ENCODE measurements at regions of chr2 and their contacts with region 1.

Region 1: GRCh38 chr2:158034199-158034866 is 67.3 kb upstream of the UPP2 start:
- DNase-seq: peak; percentile 54
- H3K4me3 ChIP-seq: no peak overlapping the region
- H3K27ac ChIP-seq: no peak overlapping the region
- H3K4me1 ChIP-seq: no peaks in the 10 kb centered on the region
- H3K27me3 ChIP-seq: no peaks in the 10 kb centered on the region
- CTCF ChIP-seq: peak; percentile 32 to 62 (median 51)
- EP300 ChIP-seq: no peak
- POLR2A ChIP-seq: no peak

Region 2: DNA sequence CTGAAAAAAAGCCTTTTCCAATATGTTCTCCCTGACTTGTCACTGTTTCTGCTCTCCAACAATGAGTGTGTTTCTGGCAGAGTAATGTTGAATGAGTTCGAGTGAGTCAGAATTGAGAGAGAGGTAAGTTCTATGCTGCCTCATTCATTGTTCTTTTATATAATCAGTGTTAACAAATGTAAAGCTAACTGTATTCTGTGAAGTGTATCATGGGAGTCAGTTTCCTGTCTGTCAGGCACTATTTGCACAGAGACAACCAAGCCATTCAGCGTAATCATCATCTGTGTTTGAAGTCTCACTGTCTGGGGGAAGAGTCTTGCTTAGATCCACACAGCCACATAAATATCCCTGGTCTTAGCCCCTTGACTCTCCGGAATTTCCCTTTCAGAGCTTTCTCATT is 45.3 kb after region 1 on chr2:
- in situ Hi-C with region 1: no loop called
- intact Hi-C with region 1: no loop called
- DNase-seq: no peak
- H3K4me3 ChIP-seq: no peak overlapping the region
- H3K27ac ChIP-seq: no peak overlapping the region
- H3K4me1 ChIP-seq: no peaks in the 10 kb centered on the region
- H3K27me3 ChIP-seq: no peaks in the 10 kb centered on the region
- CTCF ChIP-seq: no peak
- EP300 ChIP-seq: no peak
- POLR2A ChIP-seq: no peak

Region 3: GRCh38 chr2:158753641-158754611 is 719.6 kb after region 1 on chr2:
- in situ Hi-C with region 1: loop called in 3 of 4 experiments (anchors 5 to 10 kb)
- intact Hi-C with region 1: loop called (anchors 5 kb)
- DNase-seq: peak; percentile 23
- H3K4me3 ChIP-seq: peak overlapping the region in 1 of 4 donors; percentile 9
- H3K27ac ChIP-seq: no peak overlapping the region
- H3K4me1 ChIP-seq: peaks cover 3 to 7% (median 6%) of the 10 kb centered on the region in 4 donors
- H3K27me3 ChIP-seq: no peaks in the 10 kb centered on the region
- CTCF ChIP-seq: peak; percentile 79 to 92 (median 86)
- EP300 ChIP-seq: no peak
- POLR2A ChIP-seq: no peak

Measured in transverse colon (tissue), 4 donors.